ENCODE measurements at regions of chr2 and their contacts with region 1.

Region 1: DNA sequence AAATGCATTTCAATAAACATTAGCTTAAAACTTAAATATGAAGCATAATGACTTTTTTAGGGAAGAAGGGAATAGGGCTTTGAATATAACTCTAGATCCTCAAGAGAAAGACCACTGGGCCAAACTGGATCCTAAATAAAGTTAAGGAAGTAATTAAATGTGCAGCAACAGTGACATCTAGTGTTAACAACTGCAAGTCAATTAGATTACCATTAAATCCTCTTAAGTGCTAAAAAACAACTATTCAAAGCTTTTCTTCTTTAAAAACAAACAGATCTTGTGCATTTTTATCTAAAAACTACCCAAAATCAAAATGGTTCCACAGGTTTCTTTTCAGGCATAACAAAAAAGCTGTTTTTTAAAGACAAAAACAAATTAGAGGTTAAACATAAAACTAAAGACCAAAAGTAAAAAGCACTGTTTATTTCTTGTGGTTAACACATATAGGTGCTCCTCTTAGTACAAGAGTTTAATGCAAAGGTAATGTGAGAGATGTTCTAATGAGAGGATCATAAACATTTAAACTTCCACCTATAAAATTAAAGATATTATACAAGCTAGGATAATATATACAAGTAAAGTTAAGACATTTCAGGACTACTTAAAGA is 111.4 kb downstream of the THADA start:
- DNase-seq: no peak
- H3K4me3 Mint-ChIP-seq: no peak overlapping the region
- H3K27ac Mint-ChIP-seq: no peak overlapping the region
- H3K4me1 Mint-ChIP-seq: peaks cover 45% of the 10 kb centered on the region
- H3K27me3 Mint-ChIP-seq: no peaks in the 10 kb centered on the region

Region 2: GRCh38 chr2:42944779-42945415 is 539.5 kb before region 1 on chr2:
- CTCF ChIA-PET with region 1: interaction called, 36 read pairs
- POLR2A ChIA-PET with region 1: no interaction called
- DNase-seq: no peak
- H3K4me3 Mint-ChIP-seq: no peak overlapping the region
- H3K27ac Mint-ChIP-seq: no peak overlapping the region
- H3K4me1 Mint-ChIP-seq: no peaks in the 10 kb centered on the region
- H3K27me3 Mint-ChIP-seq: peaks cover 2% of the 10 kb centered on the region

Region 3: DNA sequence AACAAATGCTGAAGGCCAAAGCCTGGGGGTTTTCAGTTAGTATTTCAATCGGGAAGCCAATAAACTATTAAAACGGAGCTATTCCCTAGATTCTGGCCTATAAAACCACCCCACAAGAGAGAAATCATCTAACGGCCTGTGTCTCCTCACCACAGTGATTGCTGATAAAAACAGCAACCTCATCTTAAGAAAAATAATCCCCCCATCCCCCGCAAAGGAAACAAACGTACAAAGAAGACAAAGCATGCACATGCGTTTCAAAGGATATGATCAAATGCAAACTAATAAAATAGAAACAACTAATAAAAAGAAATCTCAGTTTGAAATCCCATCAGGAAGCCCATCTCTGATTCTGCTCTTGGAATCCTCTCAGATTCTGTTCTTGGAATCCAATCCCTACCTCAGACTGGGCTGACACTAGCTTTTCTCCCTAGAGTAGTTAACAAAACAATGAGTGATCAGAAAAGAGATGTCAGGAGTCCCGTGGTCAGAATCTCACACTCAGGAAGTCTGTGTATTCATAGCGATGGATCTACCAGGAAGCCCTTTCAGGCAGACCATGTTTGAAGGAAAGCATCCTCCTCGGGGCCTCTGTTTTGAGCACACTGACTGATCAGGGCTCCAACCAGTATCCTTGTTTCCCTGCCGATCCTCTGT is 39.3 kb before region 1 on chr2:
- CTCF ChIA-PET with region 1: no interaction called
- POLR2A ChIA-PET with region 1: no interaction called
- DNase-seq: no peak
- H3K4me3 Mint-ChIP-seq: no peak overlapping the region
- H3K27ac Mint-ChIP-seq: no peak overlapping the region
- H3K4me1 Mint-ChIP-seq: peaks cover 5% of the 10 kb centered on the region
- H3K27me3 Mint-ChIP-seq: no peaks in the 10 kb centered on the region

Region 4: DNA sequence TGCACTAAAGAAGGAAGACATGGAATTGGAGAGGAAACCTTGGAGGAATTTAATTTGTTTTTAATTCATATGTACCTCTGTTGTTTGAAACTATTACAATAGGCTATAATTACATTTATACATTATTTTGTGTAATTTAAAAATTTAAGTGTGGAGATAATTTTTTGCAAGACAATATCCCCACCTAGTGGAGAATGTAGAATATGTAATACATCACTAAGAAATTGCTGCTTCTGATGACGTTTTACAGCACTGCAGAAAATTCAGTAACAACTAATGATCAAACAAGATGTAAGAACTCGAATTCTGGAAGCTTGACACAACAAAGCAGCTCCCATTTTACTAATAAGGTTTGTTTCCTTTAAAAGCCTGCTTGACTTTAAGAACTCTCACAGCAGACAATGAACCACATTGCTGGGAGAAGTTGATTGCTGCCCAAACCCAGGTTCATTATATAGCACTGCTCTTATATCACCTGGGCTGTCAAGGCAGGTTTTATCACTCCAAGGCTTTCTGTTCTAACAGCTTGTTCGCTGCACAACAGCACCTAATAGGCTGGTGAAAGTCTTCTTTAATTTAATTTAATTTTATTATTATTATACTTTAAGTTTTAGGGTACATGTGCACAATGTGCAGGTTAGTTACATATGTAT is 58.0 kb after region 1 on chr2:
- CTCF ChIA-PET with region 1: interaction called, 19 read pairs
- POLR2A ChIA-PET with region 1: no interaction called
- DNase-seq: no peak
- H3K4me3 Mint-ChIP-seq: no peak overlapping the region
- H3K27ac Mint-ChIP-seq: no peak overlapping the region
- H3K4me1 Mint-ChIP-seq: peaks cover 20% of the 10 kb centered on the region
- H3K27me3 Mint-ChIP-seq: no peaks in the 10 kb centered on the region